ENCODE measurements at regions of chr21 and their contacts with region 1.

Region 1: GRCh38 chr21:46228345-46229051 is at the start of gene LSS:
- DNase-seq: peak; percentile 97
- H3K4me3 Mint-ChIP-seq: peak within 1 kb of the TSS; percentile 98
- H3K27ac Mint-ChIP-seq: peak within 1 kb of the TSS; percentile 99
- H3K4me1 Mint-ChIP-seq: peaks cover 52% of the 10 kb centered on the region
- H3K27me3 Mint-ChIP-seq: no peaks in the 10 kb centered on the region
- total RNA-seq, gene LSS: 28.5 and 30.5 TPM in 2 replicates

Region 2: GRCh38 chr21:45973659-45974072 is 254.8 kb before region 1 on chr21:
- intact Hi-C with region 1: loop called (anchors 5 kb)
- DNase-seq: peak; percentile 61
- H3K4me3 Mint-ChIP-seq: peak overlapping the region; percentile 79
- H3K27ac Mint-ChIP-seq: no peak overlapping the region
- H3K4me1 Mint-ChIP-seq: peaks cover 10% of the 10 kb centered on the region
- H3K27me3 Mint-ChIP-seq: peaks cover 23% of the 10 kb centered on the region

Region 3: DNA sequence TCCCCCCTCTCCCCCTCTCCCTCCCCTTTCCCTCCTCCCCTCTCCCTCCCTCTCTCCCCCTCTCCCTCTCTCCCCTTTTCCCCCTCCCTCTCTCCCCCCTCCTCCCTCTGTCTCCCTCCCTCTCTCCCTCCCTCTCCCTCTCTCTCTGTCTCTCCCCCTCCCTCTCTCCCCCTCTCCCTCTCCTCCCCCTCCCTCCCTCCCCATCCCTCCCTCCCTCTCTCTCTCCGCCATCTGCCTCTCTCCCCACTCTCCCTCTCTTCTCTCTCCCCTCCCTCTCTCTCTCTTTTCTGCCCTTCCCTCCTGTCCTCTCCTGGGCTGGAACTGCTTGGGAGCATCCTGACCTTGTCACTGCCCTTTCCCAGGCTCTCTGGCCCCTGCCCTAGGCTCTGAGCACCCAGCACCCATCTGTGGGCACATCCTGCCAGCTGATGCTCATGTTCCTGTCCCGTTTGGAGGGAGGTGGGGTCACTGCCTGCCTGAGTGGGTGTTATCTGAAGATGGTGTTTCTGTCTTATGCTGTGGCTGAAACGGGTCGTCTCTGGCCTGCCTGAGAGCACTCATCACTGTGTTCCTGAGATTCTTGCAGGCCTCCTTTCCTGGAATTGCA is 83.9 kb before region 1 on chr21:
- intact Hi-C with region 1: loop called (anchors 2 kb)
- DNase-seq: no peak
- H3K4me3 Mint-ChIP-seq: no peak overlapping the region
- H3K27ac Mint-ChIP-seq: peak overlapping the region; percentile 86
- H3K4me1 Mint-ChIP-seq: peaks cover 10% of the 10 kb centered on the region
- H3K27me3 Mint-ChIP-seq: no peaks in the 10 kb centered on the region

Region 4: DNA sequence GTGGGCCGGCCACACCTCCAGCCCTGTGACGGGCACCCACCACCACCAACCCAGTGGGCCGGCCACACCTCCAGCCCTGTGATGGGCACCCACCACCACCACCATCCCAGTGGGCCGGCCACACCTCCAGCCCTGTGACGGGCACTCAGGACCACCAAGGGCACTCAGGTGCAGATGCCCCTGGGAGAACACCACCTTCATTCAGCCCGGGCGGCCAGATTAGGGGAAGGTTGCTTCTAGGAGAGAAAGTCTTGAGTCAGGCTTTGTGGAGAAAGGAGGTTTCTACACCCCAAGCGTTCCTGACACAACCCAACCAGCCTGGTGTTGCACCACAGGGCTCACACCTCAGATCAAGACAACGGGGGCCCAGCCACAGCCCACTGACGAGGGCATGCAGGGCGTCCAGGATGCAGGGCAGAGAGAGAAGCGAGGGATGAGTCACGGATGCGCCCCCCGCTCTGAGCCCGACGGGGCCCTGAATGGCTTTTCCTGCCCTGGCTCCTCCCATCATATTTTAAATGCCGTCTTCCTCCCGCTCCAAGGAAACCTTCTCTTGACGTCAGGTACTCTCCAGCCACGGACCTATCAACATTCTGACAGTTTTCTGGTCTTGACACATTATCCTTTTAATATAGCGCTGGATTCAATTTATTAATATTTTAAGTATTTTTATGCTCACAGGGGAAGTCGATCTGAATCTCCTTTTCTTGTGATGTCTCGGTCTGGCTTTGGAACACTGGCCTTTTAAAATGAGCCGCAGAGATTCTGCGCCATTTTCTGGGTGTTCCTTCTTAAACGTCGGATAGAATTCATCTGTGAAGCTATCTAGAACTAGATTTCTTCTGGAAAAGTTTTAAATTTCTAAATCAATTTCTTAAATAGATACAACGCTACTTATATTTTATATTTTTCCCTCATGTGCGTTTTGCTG is 43.6 kb before region 1 on chr21:
- intact Hi-C with region 1: loop called (anchors 5 kb)
- DNase-seq: peak; percentile 78
- H3K4me3 Mint-ChIP-seq: peak overlapping the region; percentile 86
- H3K27ac Mint-ChIP-seq: peak overlapping the region; percentile 90
- H3K4me1 Mint-ChIP-seq: peaks cover 7% of the 10 kb centered on the region
- H3K27me3 Mint-ChIP-seq: no peaks in the 10 kb centered on the region

Region 5: GRCh38 chr21:46285761-46286496 is 57.4 kb after region 1 on chr21 and contains the start of gene YBEY:
- intact Hi-C with region 1: loop called (anchors 1 kb)
- DNase-seq: peak; percentile 85
- H3K4me3 Mint-ChIP-seq: peak within 1 kb of the TSS; percentile 98
- H3K27ac Mint-ChIP-seq: peak within 1 kb of the TSS; percentile 99
- H3K4me1 Mint-ChIP-seq: peaks cover 42% of the 10 kb centered on the region
- H3K27me3 Mint-ChIP-seq: no peaks in the 10 kb centered on the region
- total RNA-seq, gene YBEY: 14.4 and 15.3 TPM in 2 replicates

Region 6: GRCh38 chr21:46323227-46324128 is 95.0 kb after region 1 on chr21 and contains the start of gene C21orf58:
- intact Hi-C with region 1: loop called (anchors 2 kb)
- DNase-seq: peak; percentile 98
- H3K4me3 Mint-ChIP-seq: peak within 1 kb of the TSS; percentile 97
- H3K27ac Mint-ChIP-seq: peak within 1 kb of the TSS; percentile 99
- H3K4me1 Mint-ChIP-seq: peaks cover 30% of the 10 kb centered on the region
- H3K27me3 Mint-ChIP-seq: no peaks in the 10 kb centered on the region
- total RNA-seq, gene C21orf58: 32.2 and 32.8 TPM in 2 replicates

Measured in activated T-helper 2 cell treated with anti-CD3 and anti-CD28 coated beads, Interferon-gamma antibody, Interleukin-2, Interleukin-4, amounts not matched to agents 10 μg/mL and 5 μg/mL and 100 μg/mL, durations not matched to agents 14 hours and 24 hours and 36 hours (primary cell).